ENCODE measurements at regions of chr3 and their contacts with region 1.

Region 1: DNA sequence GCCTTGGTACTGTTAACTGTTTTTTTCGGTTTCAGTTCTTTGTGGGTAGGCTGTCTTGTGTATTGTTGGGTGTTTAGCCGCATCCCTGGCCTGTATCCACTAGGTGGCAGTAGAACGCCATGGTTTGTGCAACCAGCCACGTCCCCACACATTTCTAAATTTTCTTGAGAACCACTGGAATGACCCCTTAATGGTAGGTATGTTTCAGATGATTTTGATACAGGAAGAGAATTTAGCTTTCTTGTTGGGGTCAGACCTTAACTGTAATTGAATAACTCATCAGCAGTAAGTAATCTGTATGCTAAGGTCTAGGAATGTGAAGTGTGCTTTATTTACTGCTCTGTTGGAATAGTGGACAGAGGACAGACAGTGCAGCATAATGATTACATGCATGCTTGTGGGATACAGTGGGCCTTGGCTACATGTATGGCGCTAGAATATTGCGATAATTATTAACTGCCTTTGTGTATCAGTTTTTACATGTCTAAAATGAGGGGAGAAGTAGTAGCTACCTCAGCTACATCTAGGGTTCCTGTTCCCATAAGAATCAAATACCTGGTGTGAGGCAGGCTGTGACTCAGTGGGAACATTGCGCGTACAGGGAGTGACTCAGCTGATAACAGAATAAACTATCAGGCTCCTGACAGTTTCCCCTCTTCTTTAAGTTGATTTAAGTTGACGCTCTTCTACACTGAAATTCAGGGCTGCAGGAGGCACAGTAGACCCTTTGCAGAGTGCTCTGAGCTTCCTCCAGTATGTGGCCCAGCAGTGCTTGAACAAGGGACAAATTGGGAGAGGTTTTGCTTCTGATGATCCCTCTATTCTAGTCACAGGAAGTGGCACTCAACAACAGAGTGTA is 25.0 kb upstream of the GPR171 start:
- DNase-seq: peak; percentile 89
- ATAC-seq: peak; percentile 89
- H3K4me3 Mint-ChIP-seq: peak overlapping the region; percentile 34
- H3K27ac Mint-ChIP-seq: peak overlapping the region; percentile 77
- H3K4me1 Mint-ChIP-seq: peaks cover 58% of the 10 kb centered on the region
- H3K27me3 Mint-ChIP-seq: no peaks in the 10 kb centered on the region

Region 2: DNA sequence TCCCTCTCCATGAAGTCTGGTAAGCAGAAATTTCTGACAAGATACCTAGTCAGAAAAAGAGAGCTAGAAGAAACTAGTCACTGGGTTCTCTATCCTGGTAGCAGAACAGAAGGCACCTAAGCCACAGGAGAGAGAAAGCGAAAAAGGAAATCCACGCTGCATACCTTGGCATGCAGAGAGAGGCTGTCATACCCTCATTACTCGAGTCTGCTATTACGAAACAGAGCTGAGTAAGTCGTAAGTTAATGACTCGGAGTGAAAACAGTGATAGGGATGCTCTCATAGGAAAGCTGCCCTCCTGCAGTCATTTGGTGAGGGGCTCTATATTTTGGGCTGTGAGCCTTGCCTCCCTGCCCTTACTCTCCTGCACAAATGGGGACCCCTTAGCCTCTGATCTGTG is 271.7 kb before region 1 on chr3:
- CTCF ChIA-PET with region 1: no interaction called
- DNase-seq: no peak
- ATAC-seq: no peak
- H3K4me3 Mint-ChIP-seq: no peak overlapping the region
- H3K27ac Mint-ChIP-seq: no peak overlapping the region
- H3K4me1 Mint-ChIP-seq: no peaks in the 10 kb centered on the region
- H3K27me3 Mint-ChIP-seq: peaks cover 41% of the 10 kb centered on the region

Region 3: DNA sequence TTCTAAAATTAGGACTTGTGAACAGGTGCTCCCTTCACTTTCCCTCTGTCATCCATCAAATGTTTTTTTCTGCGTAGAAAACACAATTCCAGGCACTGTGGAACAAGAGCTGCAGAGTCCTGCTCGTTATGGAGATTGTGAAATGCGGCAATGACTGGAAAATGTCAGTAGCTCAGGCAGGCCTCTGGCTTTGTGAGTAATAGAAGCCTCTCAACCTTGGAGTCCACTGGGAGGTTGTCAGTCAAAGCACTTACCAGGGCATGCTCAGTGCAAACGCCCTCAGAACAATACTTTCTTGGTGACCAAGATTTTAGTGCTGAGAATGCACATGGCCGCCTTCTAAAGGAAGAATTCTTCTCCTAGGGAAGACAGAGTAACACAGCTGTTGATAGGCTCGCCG is 169.3 kb before region 1 on chr3:
- CTCF ChIA-PET with region 1: no interaction called
- DNase-seq: no peak
- ATAC-seq: no peak
- H3K4me3 Mint-ChIP-seq: no peak overlapping the region
- H3K27ac Mint-ChIP-seq: no peak overlapping the region
- H3K4me1 Mint-ChIP-seq: no peaks in the 10 kb centered on the region
- H3K27me3 Mint-ChIP-seq: peaks cover 20% of the 10 kb centered on the region

Region 4: GRCh38 chr3:151203051-151203420 is 25.0 kb before region 1 on chr3 and contains the start of gene GPR171:
- CTCF ChIA-PET with region 1: interaction called, 20 read pairs
- DNase-seq: peak; percentile 89
- ATAC-seq: peak; percentile 60
- H3K4me3 Mint-ChIP-seq: peak within 1 kb of the TSS; percentile 98
- H3K27ac Mint-ChIP-seq: peak within 1 kb of the TSS; percentile 97
- H3K4me1 Mint-ChIP-seq: peaks cover 67% of the 10 kb centered on the region
- H3K27me3 Mint-ChIP-seq: no peaks in the 10 kb centered on the region
- total RNA-seq, gene GPR171: 153 to 218 TPM

Region 5: GRCh38 chr3:151210676-151211381 is 17.2 kb before region 1 on chr3:
- CTCF ChIA-PET with region 1: interaction called, 20 read pairs
- DNase-seq: peak; percentile 57
- ATAC-seq: peak; percentile 46
- H3K4me3 Mint-ChIP-seq: peak overlapping the region; percentile 52
- H3K27ac Mint-ChIP-seq: peak overlapping the region; percentile 90
- H3K4me1 Mint-ChIP-seq: peaks cover 61% of the 10 kb centered on the region
- H3K27me3 Mint-ChIP-seq: no peaks in the 10 kb centered on the region

Region 6: GRCh38 chr3:151265866-151266265 is 37.8 kb after region 1 on chr3:
- CTCF ChIA-PET with region 1: interaction called, 35 read pairs
- DNase-seq: no peak
- ATAC-seq: no peak
- H3K4me3 Mint-ChIP-seq: no peak overlapping the region
- H3K27ac Mint-ChIP-seq: no peak overlapping the region
- H3K4me1 Mint-ChIP-seq: peaks cover 33% of the 10 kb centered on the region
- H3K27me3 Mint-ChIP-seq: no peaks in the 10 kb centered on the region

Region 7: GRCh38 chr3:151491525-151491924 is 263.5 kb after region 1 on chr3:
- CTCF ChIA-PET with region 1: no interaction called
- DNase-seq: no peak
- ATAC-seq: no peak
- H3K4me3 Mint-ChIP-seq: no peak overlapping the region
- H3K27ac Mint-ChIP-seq: no peak overlapping the region
- H3K4me1 Mint-ChIP-seq: no peaks in the 10 kb centered on the region
- H3K27me3 Mint-ChIP-seq: peaks cover 9% of the 10 kb centered on the region

Region 8: DNA sequence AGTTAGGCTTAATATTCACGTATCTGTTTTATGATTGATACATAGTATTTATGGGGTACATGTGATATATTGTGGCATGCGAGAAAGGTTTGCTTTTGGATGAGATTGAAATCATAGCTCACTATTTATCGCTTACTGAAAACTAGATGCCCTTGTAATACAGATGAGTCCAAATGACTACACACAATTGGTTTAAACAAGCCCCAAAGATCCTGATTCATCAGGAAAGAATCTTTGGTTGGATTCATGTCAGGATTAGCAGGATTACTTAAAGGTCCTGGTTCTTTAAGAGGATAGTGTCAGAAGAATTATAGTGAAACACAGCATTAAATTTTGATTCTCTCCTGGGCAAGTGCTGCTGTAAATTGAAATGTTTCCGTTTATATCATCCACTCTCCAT is 567.2 kb after region 1 on chr3:
- CTCF ChIA-PET with region 1: no interaction called
- DNase-seq: no peak
- ATAC-seq: no peak
- H3K4me3 Mint-ChIP-seq: no peak overlapping the region
- H3K27ac Mint-ChIP-seq: no peak overlapping the region
- H3K4me1 Mint-ChIP-seq: no peaks in the 10 kb centered on the region
- H3K27me3 Mint-ChIP-seq: peaks cover 3% of the 10 kb centered on the region

Measured in activated CD8-positive, alpha-beta memory T cell treated with anti-CD3 and anti-CD28 coated beads, Interleukin-2, amount 10 ng/mL, durations not matched to agents 7 days and 5 days (primary cell).